HCT116 (cell line): ENCODE measurements at regions of chr9 and their contacts with region 1.

Region 1: DNA sequence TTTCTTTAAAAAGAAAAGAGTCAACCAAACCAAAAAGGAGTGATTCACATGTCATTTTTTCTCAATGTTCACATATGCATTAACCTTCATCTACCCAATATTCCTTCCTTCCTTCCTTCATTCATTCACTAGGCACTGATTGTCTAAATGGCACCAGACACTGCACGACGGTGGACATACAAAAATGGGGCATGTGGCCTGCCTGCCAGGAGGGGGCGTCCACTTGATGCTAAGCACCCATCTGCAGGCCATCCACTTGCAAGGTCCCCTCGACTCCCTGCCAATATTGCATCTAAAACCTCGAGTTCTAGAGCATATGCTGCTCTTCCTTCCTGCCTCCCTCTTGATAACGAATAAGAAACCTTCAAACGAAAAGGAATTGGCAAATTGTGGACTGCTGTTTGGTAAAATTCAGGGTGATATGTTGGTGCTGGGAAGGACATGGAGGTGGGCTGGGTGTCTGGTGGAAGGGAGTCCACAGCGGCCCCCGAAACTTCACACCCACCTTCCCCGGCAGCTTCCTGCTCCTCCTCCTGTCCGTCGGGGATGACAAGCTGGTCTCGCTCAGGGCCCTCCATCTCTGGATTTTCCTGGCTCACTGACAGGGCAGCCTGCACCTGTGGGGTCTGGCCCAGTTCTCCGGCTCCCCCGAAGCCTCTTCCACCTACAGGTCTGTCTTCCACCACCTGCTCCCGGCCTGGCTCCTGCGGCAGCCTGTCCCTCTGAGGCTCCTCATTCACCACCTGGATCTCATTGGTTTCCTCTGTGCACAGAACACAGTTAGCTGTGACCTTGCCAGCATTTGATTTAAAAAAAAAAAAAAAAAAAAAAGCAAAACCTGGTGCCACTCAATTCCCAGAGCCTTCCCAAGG is 64.3 kb downstream of the GOLM1 start:
- DNase-seq: peak; percentile 29
- ATAC-seq: peak; percentile 91
- H3K4me3 ChIP-seq: no peak overlapping the region
- H3K27ac ChIP-seq: no peak overlapping the region
- H3K4me1 ChIP-seq: no peaks in the 10 kb centered on the region
- H3K27me3 ChIP-seq: no peaks in the 10 kb centered on the region
- CTCF ChIP-seq: peak; percentile 54 to 84 (median 84); a peak in 5 of 6 replicates
- POLR2A ChIP-seq: no peak
- RAD21 ChIP-seq: peak; percentile 70

Region 2: GRCh38 chr9:86079865-86080469 is 44.9 kb after region 1 on chr9:
- CTCF ChIA-PET with region 1: no interaction called
- POLR2A ChIA-PET with region 1: no interaction called
- RAD21 ChIA-PET with region 1: no interaction called
- intact Hi-C with region 1: no loop called
- DNase-seq: no peak
- ATAC-seq: no peak
- H3K4me3 ChIP-seq: no peak overlapping the region
- H3K27ac ChIP-seq: no peak overlapping the region
- H3K4me1 ChIP-seq: peaks cover 0 to 12% of the 10 kb centered on the region in 2 experiments; a peak in 1 of 4 replicates
- H3K27me3 ChIP-seq: no peaks in the 10 kb centered on the region
- CTCF ChIP-seq: no peak
- POLR2A ChIP-seq: no peak
- RAD21 ChIP-seq: no peak

Region 3: DNA sequence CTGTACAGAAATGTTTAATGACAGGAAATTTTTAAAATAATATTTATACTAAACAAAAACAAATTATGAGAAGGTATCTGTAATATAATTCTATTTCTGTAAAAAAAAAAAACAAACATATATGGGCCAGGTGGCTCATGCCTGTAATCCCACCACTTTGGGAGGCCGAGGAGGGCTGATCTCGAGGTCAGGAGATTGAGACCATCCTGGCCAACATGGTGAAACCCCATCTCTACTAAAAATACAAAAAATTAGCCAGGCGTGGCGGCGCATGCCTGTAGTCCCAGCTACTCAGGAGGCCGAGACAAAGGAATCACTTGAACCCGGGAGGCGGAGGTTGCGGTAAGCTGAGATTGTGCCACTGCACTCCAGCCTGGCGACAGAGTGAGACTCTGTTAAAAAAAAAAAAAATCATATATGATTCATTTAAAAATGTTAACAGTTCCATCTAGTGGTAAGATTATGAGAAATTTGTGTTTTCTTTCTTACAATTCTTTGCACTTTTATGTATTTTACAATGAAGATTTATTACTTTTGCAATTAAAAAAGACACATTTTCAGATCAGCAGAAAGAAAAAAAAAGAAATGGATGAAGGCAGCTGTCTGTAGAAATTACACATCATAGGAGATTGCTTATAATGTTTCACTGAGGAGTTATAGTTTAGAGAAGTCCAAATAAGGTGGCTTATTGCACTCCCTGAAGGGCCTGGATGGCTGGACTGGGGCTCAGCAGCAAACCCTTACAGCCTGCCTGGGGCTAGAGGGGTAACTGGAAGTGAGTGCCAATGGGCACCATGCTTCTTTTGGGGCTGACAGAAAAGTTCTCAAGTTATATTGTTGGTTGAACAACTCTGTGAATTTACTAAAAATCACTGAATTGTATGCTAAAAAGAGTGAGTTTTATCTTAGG is 204.0 kb after region 1 on chr9:
- CTCF ChIA-PET with region 1: no interaction called
- POLR2A ChIA-PET with region 1: no interaction called
- RAD21 ChIA-PET with region 1: no interaction called
- intact Hi-C with region 1: loop called (anchors 1 kb)
- DNase-seq: no peak
- ATAC-seq: 0 out of 2 replicates have a peak, but pooled peaks have one; percentile 44
- H3K4me3 ChIP-seq: no peak overlapping the region
- H3K27ac ChIP-seq: no peak overlapping the region
- H3K4me1 ChIP-seq: no peaks in the 10 kb centered on the region
- H3K27me3 ChIP-seq: no peaks in the 10 kb centered on the region
- CTCF ChIP-seq: peak in 2 of 3 experiments; percentile 13 to 35; a peak in 1 of 6 replicates
- POLR2A ChIP-seq: no peak
- RAD21 ChIP-seq: peak; percentile 51